Esophagus muscularis mucosa (tissue), 4 donors: ENCODE measurements at regions of chr21 and their contacts with region 1.

Region 1: GRCh38 chr21:45820171-45821091 is 161.1 kb upstream of the COL6A1 start:
- DNase-seq: peak; percentile 50
- H3K4me3 ChIP-seq: no peak overlapping the region
- H3K27ac ChIP-seq: no peak overlapping the region
- H3K4me1 ChIP-seq: peaks cover 0 to 8% (median 3%) of the 10 kb centered on the region in 4 donors
- H3K27me3 ChIP-seq: peaks cover 0 to 27% (median 0%) of the 10 kb centered on the region in 4 donors
- CTCF ChIP-seq: peak; percentile 76 to 84 (median 77)
- EP300 ChIP-seq: no peak
- POLR2A ChIP-seq: no peak

Region 2: GRCh38 chr21:45470773-45471524 is 349.5 kb before region 1 on chr21:
- intact Hi-C with region 1: loop called (anchors 5 kb)
- DNase-seq: no peak
- H3K4me3 ChIP-seq: peak overlapping the region; percentile 6 to 45 (median 21)
- H3K27ac ChIP-seq: peak overlapping the region; percentile 73 to 88 (median 82)
- H3K4me1 ChIP-seq: peaks cover 18 to 56% (median 45%) of the 10 kb centered on the region in 4 donors
- H3K27me3 ChIP-seq: no peaks in the 10 kb centered on the region
- CTCF ChIP-seq: no peak
- EP300 ChIP-seq: no peak
- POLR2A ChIP-seq: no peak

Region 3: DNA sequence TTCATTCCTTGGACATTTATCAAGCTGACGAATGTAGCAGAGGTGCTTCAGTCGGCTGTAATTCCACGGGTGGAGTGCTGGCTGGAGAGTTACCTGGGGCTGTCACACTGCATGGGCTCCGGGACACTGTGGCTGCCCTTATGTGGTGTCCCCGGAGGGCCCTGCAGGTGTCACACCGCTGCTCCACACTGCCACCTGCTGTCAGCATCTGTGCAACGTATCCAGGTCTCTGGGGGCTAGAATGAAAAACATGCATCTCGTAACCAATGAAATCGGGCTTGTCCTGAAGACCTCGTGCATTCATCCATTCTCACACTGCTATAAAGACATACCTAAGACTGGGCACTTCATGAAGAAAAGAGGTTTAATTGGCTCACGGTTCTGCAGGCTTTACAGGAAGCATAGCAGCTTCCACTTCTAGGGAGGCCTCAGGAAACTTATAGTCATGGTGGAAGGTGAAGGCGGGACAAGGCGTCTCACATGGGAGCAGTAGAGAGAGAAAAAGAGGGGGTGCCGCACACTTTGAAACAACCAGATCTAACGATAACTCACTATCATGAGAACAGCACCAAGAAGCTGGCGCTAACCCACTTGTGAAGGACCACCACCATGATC is 223.6 kb before region 1 on chr21:
- intact Hi-C with region 1: loop called (anchors 5 kb)
- DNase-seq: no peak
- H3K4me3 ChIP-seq: no peak overlapping the region
- H3K27ac ChIP-seq: no peak overlapping the region
- H3K4me1 ChIP-seq: peaks cover 0 to 10% (median 6%) of the 10 kb centered on the region in 4 donors
- H3K27me3 ChIP-seq: peaks cover 0 to 43% (median 0%) of the 10 kb centered on the region in 4 donors
- CTCF ChIP-seq: peak; percentile 79 to 85 (median 82)
- EP300 ChIP-seq: no peak
- POLR2A ChIP-seq: no peak